Activated CD4-positive, alpha-beta T cell treated with anti-CD3 and anti-CD28 coated beads for 36 hours (primary cell): ENCODE measurements at regions of chr2 and their contacts with region 1.

Region 1: DNA sequence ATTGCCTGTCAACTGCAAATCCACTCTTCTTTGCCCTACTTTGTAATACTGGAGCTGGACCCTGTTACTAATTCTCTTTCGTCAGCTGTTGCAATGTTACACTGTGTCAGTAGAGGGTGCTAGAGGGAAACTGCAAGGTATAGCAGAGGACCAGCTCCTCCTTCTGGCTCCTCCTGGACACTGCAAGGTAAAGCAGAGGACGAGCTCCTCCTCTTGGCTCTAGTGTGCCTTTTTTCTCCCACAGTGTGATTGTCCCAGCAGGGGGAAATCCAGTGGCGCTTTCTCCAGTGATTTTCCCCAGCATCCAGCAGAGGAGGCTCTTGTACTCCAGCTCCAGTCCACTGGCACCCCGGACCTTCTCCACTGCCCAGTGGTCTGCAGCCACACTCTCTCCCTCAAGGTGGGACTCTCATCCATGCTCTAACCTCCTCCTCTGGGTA is 95.6 kb downstream of the CAPN13 start:
- DNase-seq: peak; percentile 91
- ATAC-seq: peak; percentile 83
- H3K4me3 Mint-ChIP-seq: no peak overlapping the region
- H3K27ac Mint-ChIP-seq: no peak overlapping the region
- H3K4me1 Mint-ChIP-seq: peaks cover 11% of the 10 kb centered on the region
- H3K27me3 Mint-ChIP-seq: no peaks in the 10 kb centered on the region

Region 2: GRCh38 chr2:30095402-30095801 is 616.3 kb before region 1 on chr2:
- CTCF ChIA-PET with region 1: interaction called, 9 read pairs
- POLR2A ChIA-PET with region 1: no interaction called
- intact Hi-C with region 1: loop called (anchors 1 kb)
- DNase-seq: no peak
- ATAC-seq: no peak
- H3K4me3 Mint-ChIP-seq: no peak overlapping the region
- H3K27ac Mint-ChIP-seq: no peak overlapping the region
- H3K4me1 Mint-ChIP-seq: no peaks in the 10 kb centered on the region
- H3K27me3 Mint-ChIP-seq: peaks cover 20% of the 10 kb centered on the region

Region 3: DNA sequence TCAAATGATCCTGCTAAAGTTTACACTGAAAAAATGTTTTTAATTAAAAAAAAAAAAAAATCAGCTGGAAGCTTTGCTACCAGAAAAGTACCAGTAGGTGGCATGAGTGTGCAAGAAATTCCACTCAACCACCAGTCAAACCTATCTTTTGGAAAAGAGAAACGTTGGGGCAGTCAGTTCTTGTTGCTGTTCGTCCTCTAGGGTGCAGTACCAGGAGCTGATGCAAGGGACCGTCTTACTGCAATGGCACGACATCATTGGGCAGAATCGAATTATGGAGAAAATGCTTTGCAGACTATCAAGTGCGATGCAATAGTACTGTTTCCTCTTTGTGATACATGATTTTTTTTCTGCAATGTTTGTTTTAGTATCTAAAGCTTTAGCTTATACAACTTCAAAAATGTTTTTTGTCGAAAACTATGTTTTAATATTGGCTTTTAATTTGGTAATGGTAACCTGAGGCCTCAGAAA is 546.6 kb before region 1 on chr2:
- CTCF ChIA-PET with region 1: interaction called, 501 read pairs
- POLR2A ChIA-PET with region 1: interaction called, 14 read pairs
- intact Hi-C with region 1: loop called (anchors 1 kb)
- DNase-seq: peak; percentile 77
- ATAC-seq: peak; percentile 100
- H3K4me3 Mint-ChIP-seq: no peak overlapping the region
- H3K27ac Mint-ChIP-seq: no peak overlapping the region
- H3K4me1 Mint-ChIP-seq: peaks cover 10% of the 10 kb centered on the region
- H3K27me3 Mint-ChIP-seq: no peaks in the 10 kb centered on the region

Region 4: GRCh38 chr2:30421604-30422443 is 289.8 kb before region 1 on chr2:
- CTCF ChIA-PET with region 1: interaction called, 13 read pairs
- POLR2A ChIA-PET with region 1: no interaction called
- intact Hi-C with region 1: no loop called
- DNase-seq: peak; percentile 48
- ATAC-seq: peak; percentile 57
- H3K4me3 Mint-ChIP-seq: peak overlapping the region; percentile 68
- H3K27ac Mint-ChIP-seq: peak overlapping the region; percentile 96
- H3K4me1 Mint-ChIP-seq: peaks cover 48% of the 10 kb centered on the region
- H3K27me3 Mint-ChIP-seq: no peaks in the 10 kb centered on the region

Region 5: GRCh38 chr2:30522421-30522820 is 189.2 kb before region 1 on chr2:
- CTCF ChIA-PET with region 1: no interaction called
- POLR2A ChIA-PET with region 1: no interaction called
- intact Hi-C with region 1: no loop called
- DNase-seq: no peak
- ATAC-seq: no peak
- H3K4me3 Mint-ChIP-seq: no peak overlapping the region
- H3K27ac Mint-ChIP-seq: no peak overlapping the region
- H3K4me1 Mint-ChIP-seq: peaks cover 2% of the 10 kb centered on the region
- H3K27me3 Mint-ChIP-seq: no peaks in the 10 kb centered on the region

Region 6: GRCh38 chr2:30721668-30722647 is 10.3 kb after region 1 on chr2:
- CTCF ChIA-PET with region 1: interaction called, 18 read pairs
- POLR2A ChIA-PET with region 1: no interaction called
- intact Hi-C with region 1: no loop called
- DNase-seq: no peak
- ATAC-seq: no peak
- H3K4me3 Mint-ChIP-seq: no peak overlapping the region
- H3K27ac Mint-ChIP-seq: no peak overlapping the region
- H3K4me1 Mint-ChIP-seq: no peaks in the 10 kb centered on the region
- H3K27me3 Mint-ChIP-seq: peaks cover 8% of the 10 kb centered on the region

Region 7: DNA sequence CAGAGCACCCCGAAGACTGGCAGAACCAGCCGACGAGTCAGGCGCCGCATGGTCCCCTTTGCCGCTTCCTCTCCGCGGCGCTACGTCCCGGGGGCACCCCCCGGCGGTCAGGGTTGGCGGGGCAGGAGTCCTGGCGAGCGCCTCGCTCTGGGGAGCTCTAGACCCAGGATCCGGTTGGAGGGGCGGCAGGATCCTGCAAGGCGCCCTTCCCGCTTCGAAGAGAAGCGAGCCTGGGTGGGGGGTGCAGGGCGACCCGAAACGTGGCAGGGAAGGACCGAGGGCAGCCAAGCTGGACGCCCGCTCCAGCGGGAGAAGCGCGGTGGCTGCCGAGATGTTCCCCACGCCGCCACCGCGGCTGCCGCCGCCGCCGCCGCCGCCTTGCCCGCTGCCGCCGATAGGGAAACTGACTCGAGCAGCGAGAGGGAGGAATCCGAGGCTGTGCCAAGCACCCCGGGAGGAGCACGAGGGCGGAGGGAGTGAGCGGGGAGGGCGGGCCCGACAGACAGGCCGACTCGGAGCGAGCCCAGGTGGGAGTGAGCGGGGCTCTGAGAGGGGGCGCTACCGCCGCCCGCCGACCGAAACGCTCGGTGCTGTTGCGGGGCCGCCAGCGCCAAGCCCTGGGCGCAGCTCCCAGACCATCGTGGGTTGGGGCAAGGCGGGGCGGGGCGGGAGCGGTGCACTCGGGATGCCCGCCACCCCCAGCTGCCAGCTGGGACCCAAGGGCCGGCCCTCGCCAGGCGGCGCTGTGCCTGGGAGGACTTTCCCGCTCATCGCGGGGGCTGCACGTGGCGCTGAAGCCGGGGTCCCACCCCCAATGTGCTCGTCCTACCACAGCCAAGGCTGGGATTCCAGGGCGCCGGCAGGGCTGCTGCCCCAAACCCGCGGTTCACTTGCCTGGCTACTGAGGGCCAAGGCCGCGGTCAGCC is 426.6 kb after region 1 on chr2 and contains the start of gene GALNT14:
- CTCF ChIA-PET with region 1: interaction called, 4 read pairs
- POLR2A ChIA-PET with region 1: no interaction called
- intact Hi-C with region 1: loop called in 1 of 2 experiments (anchors 10 kb)
- DNase-seq: peak; percentile 74
- ATAC-seq: peak; percentile 79
- H3K4me3 Mint-ChIP-seq: peak within 1 kb of the TSS; percentile 64
- H3K27ac Mint-ChIP-seq: no peak within 1 kb of the TSS
- H3K4me1 Mint-ChIP-seq: peaks cover 7% of the 10 kb centered on the region
- H3K27me3 Mint-ChIP-seq: peaks cover 31% of the 10 kb centered on the region
- total RNA-seq, gene GALNT14: 0.48 to 0.83 TPM